Common myeloid progenitor, CD34-positive (primary cell): ENCODE measurements at regions of chr7 and their contacts with region 1.

Region 1: DNA sequence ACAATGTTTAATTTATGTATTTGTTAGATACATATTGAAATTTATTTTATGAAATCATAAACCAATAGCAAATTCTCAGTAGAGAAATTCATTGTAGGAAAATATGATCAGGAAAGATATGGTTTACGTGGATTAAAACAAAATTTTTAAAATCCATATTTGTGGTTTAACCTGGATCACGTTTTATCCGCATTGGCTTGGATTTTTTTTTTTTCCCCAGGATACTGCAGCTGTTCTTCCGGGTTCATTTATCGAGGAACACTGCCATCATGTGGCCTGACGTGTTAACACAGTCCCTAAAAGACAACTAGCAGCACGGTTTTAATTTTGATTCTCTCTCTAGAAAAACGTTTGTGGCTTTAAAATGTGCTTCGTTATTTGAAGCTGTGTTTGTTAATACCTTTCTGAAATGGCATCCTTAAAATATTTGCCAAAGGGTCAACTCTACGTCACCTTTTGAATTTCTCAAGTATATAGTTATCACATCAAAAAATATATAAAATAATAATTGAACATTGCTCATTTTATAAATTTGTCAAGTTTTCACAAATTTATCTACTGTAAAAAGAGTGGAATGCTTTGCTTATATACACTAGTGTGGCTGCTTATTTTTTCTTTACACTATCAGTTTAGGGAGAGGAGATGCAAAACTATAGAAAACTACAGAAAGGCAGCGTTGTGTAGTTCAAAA is 8.7 kb upstream of the ASB4 start:
- DNase-seq: peak; percentile 67 to 80 (median 78)
- H3K4me3 ChIP-seq: no peak overlapping the region
- H3K27ac ChIP-seq: no peak overlapping the region
- H3K4me1 ChIP-seq: no peaks in the 10 kb centered on the region
- H3K27me3 ChIP-seq: no peaks in the 10 kb centered on the region

Region 2: DNA sequence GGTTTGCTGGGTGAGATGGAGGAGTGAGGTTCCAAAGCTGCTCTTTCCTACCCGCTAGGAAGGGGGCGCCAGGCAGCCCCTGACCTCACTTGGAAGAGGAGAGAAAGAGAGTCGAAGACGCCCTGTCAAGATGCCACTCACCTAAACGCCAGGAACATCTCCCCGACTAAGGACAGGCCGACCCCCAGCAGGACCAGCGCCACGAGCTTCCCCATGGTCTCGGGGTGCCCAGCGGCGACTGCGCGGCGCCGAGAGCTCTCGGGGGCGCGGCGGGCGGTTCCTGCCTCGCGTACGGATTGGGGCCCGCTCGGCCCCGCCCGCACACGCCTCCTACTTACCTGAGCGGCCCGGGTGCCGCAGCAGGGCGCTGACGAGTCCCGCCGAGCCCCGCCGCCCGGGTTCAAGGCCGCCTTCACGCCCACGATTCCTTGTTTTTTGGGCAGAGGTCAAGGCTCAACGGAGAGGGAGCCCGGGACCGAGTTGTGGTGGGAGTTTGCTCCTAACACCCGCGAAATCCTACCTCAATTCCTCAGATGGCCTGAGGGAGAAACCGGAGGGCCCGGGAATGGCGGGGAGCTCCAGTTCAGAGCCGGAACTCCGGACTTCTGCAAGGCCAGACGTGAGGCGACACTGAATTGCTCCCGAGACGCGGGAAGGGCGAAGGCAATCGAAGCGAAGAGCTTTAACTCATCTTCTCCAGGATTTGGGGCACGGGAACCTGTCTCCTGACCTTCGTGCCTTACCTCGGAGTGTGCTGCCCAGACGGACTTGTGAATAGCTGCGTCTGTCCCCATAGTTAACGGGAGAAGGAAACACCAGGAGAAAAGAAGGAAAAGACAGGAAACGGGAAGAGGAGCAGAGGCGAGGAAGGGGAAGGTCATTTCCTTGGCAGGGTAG is 80.7 kb before region 1 on chr7 and contains the start of gene PON3:
- CTCF ChIA-PET with region 1: interaction called, 14 read pairs
- POLR2A ChIA-PET with region 1: no interaction called
- DNase-seq: peak; percentile 48 to 73 (median 67)
- H3K4me3 ChIP-seq: peak within 1 kb of the TSS; percentile 35 to 80 (median 64)
- H3K27ac ChIP-seq: no peak within 1 kb of the TSS
- H3K4me1 ChIP-seq: peaks cover 0 to 14% (median 8%) of the 10 kb centered on the region in 4 experiments
- H3K27me3 ChIP-seq: peaks cover 0 to 18% (median 8%) of the 10 kb centered on the region in 5 experiments

Region 3: GRCh38 chr7:95491634-95492320 is 14.7 kb after region 1 on chr7:
- CTCF ChIA-PET with region 1: interaction called, 24 read pairs
- POLR2A ChIA-PET with region 1: no interaction called
- DNase-seq: no peak
- H3K4me3 ChIP-seq: no peak overlapping the region
- H3K27ac ChIP-seq: no peak overlapping the region
- H3K4me1 ChIP-seq: no peaks in the 10 kb centered on the region
- H3K27me3 ChIP-seq: no peaks in the 10 kb centered on the region

Region 4: DNA sequence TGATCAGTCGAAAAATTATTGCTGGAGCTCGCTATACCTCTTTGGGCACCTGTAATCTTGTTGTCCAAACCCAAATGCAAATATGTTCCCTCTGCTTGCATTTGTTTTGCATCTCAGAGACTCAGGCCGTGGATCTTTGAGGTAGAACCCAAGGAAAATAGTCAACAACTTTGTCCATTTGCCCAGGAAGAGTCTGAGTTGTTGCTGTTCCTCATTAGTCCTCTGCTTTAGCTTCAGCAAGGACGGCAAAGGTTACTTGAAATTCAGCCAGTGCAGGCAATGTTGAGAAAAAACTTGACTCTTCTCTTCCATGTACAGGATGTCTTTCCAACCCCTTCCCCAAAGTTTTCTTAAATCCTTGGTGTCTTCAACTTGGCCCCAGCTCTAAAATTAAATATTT is 73.5 kb after region 1 on chr7:
- CTCF ChIA-PET with region 1: no interaction called
- POLR2A ChIA-PET with region 1: no interaction called
- DNase-seq: no peak
- H3K4me3 ChIP-seq: no peak overlapping the region
- H3K27ac ChIP-seq: no peak overlapping the region
- H3K4me1 ChIP-seq: no peaks in the 10 kb centered on the region
- H3K27me3 ChIP-seq: no peaks in the 10 kb centered on the region